Endothelial cell of umbilical vein (primary cell): ENCODE measurements at regions of chr21 and their contacts with region 1.

Region 1: GRCh38 chr21:16117851-16118592 is 388.2 kb downstream of the USP25 start:
- DNase-seq: peak; percentile 93
- H3K4me3 ChIP-seq: peak overlapping the region in 1 of 3 experiments; percentile 45
- H3K27ac ChIP-seq: peak overlapping the region; percentile 97
- H3K4me1 ChIP-seq: peaks cover 34% of the 10 kb centered on the region
- H3K27me3 ChIP-seq: no peaks in the 10 kb centered on the region
- CTCF ChIP-seq: no peak
- POLR2A ChIP-seq: peak; percentile 48

Region 2: DNA sequence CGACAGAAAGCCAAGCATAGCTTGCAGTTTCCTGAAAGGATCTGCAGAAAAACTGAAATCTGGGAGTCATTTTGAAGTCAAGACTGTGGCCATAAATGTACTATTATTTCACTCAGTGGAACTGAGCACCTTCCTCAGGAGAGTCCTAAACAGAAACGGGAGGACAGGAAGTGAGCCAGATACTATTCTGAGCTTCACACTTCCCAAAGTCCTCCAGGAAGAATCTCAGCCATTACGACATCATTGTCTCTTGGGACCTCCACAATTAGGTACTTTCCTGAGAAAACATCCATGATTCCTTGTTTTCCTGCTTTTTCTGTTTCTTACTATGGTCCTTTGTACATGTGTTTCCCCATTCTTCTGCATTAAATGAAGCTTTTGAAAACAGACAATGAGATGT is 687.4 kb before region 1 on chr21:
- CTCF ChIA-PET with region 1: no interaction called
- POLR2A ChIA-PET with region 1: no interaction called
- dilution Hi-C with region 1: no loop called
- intact Hi-C with region 1: no loop called
- DNase-seq: no peak
- H3K4me3 ChIP-seq: no peak overlapping the region
- H3K27ac ChIP-seq: no peak overlapping the region
- H3K4me1 ChIP-seq: no peaks in the 10 kb centered on the region
- H3K27me3 ChIP-seq: no peaks in the 10 kb centered on the region
- CTCF ChIP-seq: no peak
- POLR2A ChIP-seq: no peak

Region 3: DNA sequence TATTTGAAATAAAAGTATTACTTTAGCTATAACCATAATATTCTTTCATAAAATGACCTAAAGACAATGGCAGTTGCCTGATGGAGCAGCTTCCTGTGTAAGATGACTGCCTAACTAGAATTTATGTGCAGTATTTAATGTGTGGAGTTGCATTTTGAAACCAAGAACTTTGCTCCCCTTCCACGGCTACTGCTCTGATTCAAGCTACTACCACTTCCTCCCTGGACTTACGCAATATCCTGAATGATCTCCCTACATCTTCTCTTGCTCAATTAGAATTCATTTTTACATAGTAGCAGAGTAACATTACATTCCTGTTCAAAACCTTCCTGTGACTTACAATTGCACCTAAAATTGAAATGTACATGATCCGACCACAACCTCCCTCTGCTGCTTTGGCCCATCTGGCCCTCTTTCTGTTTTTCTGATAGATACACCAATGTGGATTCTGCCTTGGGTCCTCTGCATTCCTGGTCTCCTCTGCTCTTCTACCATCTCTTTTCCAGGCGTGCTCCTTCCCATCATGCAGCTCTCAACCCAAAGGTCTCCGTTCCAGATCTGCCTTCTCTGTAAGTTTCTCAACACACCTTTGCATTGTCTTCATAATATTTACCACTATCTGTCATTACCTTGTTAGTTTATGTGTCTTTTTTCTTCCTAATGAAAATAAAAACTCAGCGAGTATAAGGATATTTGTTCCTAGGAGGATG is 435.7 kb before region 1 on chr21:
- CTCF ChIA-PET with region 1: no interaction called
- POLR2A ChIA-PET with region 1: no interaction called
- dilution Hi-C with region 1: no loop called
- intact Hi-C with region 1: loop called (anchors 1 kb)
- DNase-seq: peak; percentile 66
- H3K4me3 ChIP-seq: peak overlapping the region in 1 of 3 experiments; percentile 56
- H3K27ac ChIP-seq: peak overlapping the region; percentile 100
- H3K4me1 ChIP-seq: peaks cover 30% of the 10 kb centered on the region
- H3K27me3 ChIP-seq: no peaks in the 10 kb centered on the region
- CTCF ChIP-seq: no peak
- POLR2A ChIP-seq: peak; percentile 23

Region 4: DNA sequence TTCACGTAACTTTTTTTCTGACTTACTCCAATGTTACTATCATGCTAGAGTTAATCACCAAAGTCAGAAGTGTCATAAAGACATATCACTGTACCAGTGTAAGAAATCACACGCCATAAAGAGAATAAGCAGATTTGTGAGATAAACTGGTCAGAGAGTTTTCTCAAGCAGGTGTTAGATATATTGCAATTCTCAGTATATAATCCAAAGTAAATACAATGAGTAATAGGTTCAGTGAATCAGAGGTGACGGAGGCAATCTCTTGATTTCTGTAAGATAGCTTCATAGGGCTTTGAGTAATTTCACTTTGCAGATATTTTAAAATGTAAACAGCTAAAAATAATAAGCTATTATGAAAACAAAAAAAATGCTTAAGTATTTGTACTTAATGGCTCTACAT is 269.4 kb before region 1 on chr21:
- CTCF ChIA-PET with region 1: no interaction called
- POLR2A ChIA-PET with region 1: no interaction called
- dilution Hi-C with region 1: no loop called
- intact Hi-C with region 1: loop called (anchors 5 kb)
- DNase-seq: peak; percentile 92
- H3K4me3 ChIP-seq: no peak overlapping the region
- H3K27ac ChIP-seq: peak overlapping the region; percentile 69
- H3K4me1 ChIP-seq: peaks cover 56% of the 10 kb centered on the region
- H3K27me3 ChIP-seq: no peaks in the 10 kb centered on the region
- CTCF ChIP-seq: no peak
- POLR2A ChIP-seq: peak; percentile 48

Region 5: DNA sequence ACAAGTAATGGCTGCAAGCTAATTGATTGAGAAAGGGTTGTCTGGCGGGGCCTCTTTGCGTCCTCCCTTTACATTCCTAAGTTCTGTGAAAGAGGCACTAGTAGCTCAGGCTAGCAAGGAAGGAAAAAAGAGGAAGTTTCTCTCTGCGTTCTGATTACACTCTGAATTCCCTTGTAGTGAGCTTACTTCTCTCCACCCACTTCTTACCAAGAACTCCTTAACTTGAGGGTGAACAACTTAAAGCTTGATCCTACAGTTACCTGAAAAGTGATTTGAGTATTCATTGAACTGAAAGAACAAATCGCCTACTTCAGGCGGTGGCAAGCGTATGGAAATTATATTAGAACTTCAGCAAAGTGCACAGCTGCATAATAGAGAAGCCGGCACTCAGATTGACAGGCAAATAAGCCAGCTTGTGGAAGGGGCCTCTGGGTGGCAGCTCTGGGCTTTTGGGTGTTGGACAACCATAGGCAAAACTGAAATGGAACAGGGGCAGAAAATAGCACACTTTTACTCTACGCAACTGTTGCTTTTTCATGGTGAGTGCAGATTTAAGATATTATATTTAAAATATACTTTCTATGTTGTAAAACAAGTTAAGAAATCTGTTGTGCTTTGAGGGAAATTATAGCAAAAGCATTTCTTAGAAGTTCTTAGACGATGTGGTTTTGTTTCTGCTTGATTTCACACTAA is 76.2 kb after region 1 on chr21:
- CTCF ChIA-PET with region 1: interaction called, 17 read pairs
- POLR2A ChIA-PET with region 1: interaction called, 20 read pairs
- dilution Hi-C with region 1: no loop called
- intact Hi-C with region 1: loop called (anchors 1 kb)
- DNase-seq: peak; percentile 91
- H3K4me3 ChIP-seq: peak overlapping the region; percentile 59 to 94 (median 63)
- H3K27ac ChIP-seq: peak overlapping the region; percentile 92
- H3K4me1 ChIP-seq: peaks cover 33% of the 10 kb centered on the region
- H3K27me3 ChIP-seq: no peaks in the 10 kb centered on the region
- CTCF ChIP-seq: peak; percentile 13 to 41
- POLR2A ChIP-seq: peak; percentile 54

Region 6: DNA sequence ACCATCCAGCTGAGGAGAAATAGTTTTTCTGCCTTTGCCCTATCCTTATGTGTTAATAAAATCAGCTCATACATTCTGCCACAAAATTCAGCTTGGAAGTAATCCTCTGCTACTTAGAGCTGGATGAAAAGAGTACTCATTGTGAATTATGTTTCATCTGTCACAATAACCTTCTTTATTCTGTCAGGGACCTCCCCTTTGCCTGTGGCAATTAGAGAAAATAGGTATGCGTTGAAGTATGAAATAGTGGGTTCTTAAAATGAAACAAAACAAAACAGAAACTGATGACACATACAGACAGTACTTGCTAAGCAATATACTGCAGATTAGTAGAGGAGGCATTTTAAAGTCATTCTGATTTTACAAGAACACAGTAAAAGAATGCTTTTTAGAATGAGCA is 190.2 kb after region 1 on chr21:
- CTCF ChIA-PET with region 1: no interaction called
- POLR2A ChIA-PET with region 1: no interaction called
- dilution Hi-C with region 1: no loop called
- intact Hi-C with region 1: loop called (anchors 2 kb)
- DNase-seq: peak; percentile 56
- H3K4me3 ChIP-seq: peak overlapping the region; percentile 13 to 54 (median 41)
- H3K27ac ChIP-seq: peak overlapping the region; percentile 35
- H3K4me1 ChIP-seq: peaks cover 40% of the 10 kb centered on the region
- H3K27me3 ChIP-seq: no peaks in the 10 kb centered on the region
- CTCF ChIP-seq: no peak
- POLR2A ChIP-seq: no peak

Region 7: DNA sequence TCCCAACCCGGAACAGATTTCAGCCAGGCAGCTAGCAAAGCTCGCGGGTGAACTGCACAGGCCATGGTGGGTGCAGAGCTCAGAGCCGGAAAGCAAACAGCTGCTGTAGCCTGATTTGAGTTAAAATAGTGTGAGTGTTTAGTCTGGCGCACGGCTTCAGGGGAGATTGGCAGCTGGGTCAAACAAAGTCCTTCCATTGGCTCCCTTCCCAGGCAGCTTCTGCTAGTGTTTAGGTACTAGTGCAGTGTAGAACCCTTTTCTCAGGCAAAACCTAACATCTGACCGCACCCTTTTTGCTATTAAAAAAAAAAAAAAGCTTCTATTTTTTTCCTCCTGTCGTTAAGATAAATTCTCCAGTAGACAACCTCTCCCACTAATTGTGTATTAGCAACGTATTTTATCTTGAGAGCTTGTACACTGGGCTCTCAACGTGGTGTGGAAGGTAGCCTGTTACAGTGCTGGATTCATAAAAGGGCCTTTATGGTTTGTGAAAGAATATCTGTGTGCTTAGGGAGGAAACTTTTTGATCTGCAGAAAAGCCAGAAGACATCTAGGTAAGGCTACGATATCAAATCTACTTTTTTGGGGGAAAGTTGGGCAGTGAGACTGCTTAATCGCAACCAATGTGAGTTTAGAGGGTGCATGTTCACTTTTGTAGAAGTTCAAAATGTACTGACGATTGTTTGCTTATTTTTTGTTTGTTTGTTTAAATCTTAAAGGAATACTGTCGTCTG is 301.3 kb after region 1 on chr21:
- CTCF ChIA-PET with region 1: interaction called, 4 read pairs
- POLR2A ChIA-PET with region 1: interaction called, 6 read pairs
- dilution Hi-C with region 1: no loop called
- intact Hi-C with region 1: loop called (anchors 1 kb)
- DNase-seq: peak; percentile 99
- H3K4me3 ChIP-seq: peak overlapping the region; percentile 34 to 100 (median 57)
- H3K27ac ChIP-seq: peak overlapping the region; percentile 85
- H3K4me1 ChIP-seq: peaks cover 26% of the 10 kb centered on the region
- H3K27me3 ChIP-seq: no peaks in the 10 kb centered on the region
- CTCF ChIP-seq: no peak
- POLR2A ChIP-seq: peak; percentile 76

Region 8: GRCh38 chr21:16534408-16535101 is 416.5 kb after region 1 on chr21:
- CTCF ChIA-PET with region 1: no interaction called
- POLR2A ChIA-PET with region 1: no interaction called
- dilution Hi-C with region 1: no loop called
- intact Hi-C with region 1: loop called (anchors 10 kb)
- DNase-seq: peak; percentile 82
- H3K4me3 ChIP-seq: no peak overlapping the region
- H3K27ac ChIP-seq: no peak overlapping the region
- H3K4me1 ChIP-seq: peaks cover 59% of the 10 kb centered on the region
- H3K27me3 ChIP-seq: no peaks in the 10 kb centered on the region
- CTCF ChIP-seq: no peak
- POLR2A ChIP-seq: no peak